ENCODE measurements at regions of chr9 and their contacts with region 1.

Region 1: DNA sequence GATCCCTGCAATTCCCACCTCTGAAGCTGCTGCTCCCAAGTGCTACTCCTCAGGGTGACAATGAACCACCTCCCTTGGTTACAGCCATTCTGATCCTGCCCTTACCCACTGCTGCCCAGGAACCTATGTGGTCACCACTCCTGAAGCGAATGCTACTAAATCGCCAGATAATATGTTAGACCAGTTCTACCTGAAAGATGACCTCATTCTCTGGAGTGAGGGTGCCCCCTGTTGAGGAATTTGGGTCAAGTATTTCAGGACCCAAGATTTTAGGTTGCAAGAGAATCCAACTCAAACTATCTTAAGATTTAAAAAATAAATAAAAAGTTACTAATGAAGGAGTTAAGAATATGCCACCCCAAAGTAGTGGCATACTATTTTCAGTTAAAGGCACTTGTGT is 5.8 kb upstream of the SNAPC3 start:
- DNase-seq: peak; percentile 38 to 49
- H3K4me3 ChIP-seq: no peak overlapping the region
- H3K27ac ChIP-seq: no peak overlapping the region
- H3K4me1 ChIP-seq: no peaks in the 10 kb centered on the region
- H3K27me3 ChIP-seq: no peaks in the 10 kb centered on the region
- CTCF ChIP-seq: peak; percentile 63

Region 2: GRCh38 chr9:15104826-15105420 is 312.0 kb before region 1 on chr9:
- CTCF ChIA-PET with region 1: no interaction called
- POLR2A ChIA-PET with region 1: no interaction called
- intact Hi-C with region 1: loop called (anchors 1 kb)
- DNase-seq: peak in 1 of 2 experiments; percentile 12
- H3K4me3 ChIP-seq: no peak overlapping the region
- H3K27ac ChIP-seq: no peak overlapping the region
- H3K4me1 ChIP-seq: no peaks in the 10 kb centered on the region
- H3K27me3 ChIP-seq: no peaks in the 10 kb centered on the region
- CTCF ChIP-seq: peak; percentile 68

Region 3: DNA sequence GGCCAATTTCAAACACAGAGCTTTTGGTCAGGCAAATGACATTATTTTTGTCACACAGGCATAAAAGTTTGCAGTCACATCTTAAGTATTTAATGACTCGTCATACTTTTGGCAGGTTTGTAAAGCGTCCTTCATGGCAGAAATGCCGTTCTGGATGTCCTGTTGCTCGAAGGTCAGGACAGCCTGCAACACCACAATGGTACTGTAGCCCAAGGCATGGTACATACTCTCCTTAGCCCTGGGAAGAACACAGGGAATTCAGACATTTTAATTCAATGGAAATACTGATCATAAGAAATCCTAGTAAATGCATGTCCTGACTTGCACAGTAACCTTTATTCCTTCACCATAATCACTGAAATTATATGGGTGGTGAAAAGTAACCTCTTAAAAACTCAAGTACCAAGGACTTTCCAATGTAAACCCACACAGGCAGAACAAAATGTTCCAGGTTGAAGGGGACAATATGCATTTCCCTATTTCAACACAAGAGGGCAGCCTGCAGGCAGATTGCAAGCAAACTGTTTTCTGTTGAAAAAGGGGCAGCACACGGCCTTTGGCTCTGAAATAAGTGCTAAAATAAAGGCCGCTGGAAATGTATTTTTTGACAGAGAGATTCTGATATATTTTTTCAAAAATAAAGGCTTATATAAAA is 205.6 kb before region 1 on chr9:
- CTCF ChIA-PET with region 1: no interaction called
- POLR2A ChIA-PET with region 1: no interaction called
- intact Hi-C with region 1: loop called (anchors 1 kb)
- DNase-seq: peak; percentile 28 to 35
- H3K4me3 ChIP-seq: no peak overlapping the region
- H3K27ac ChIP-seq: no peak overlapping the region
- H3K4me1 ChIP-seq: no peaks in the 10 kb centered on the region
- H3K27me3 ChIP-seq: no peaks in the 10 kb centered on the region
- CTCF ChIP-seq: peak; percentile 79

Region 4: GRCh38 chr9:15271403-15271802 is 145.5 kb before region 1 on chr9:
- CTCF ChIA-PET with region 1: no interaction called
- POLR2A ChIA-PET with region 1: no interaction called
- intact Hi-C with region 1: no loop called
- DNase-seq: no peak
- H3K4me3 ChIP-seq: no peak overlapping the region
- H3K27ac ChIP-seq: no peak overlapping the region
- H3K4me1 ChIP-seq: no peaks in the 10 kb centered on the region
- H3K27me3 ChIP-seq: no peaks in the 10 kb centered on the region
- CTCF ChIP-seq: no peak

Measured in PC-9 (cell line).